ENCODE measurements at regions of chr16 and their contacts with region 1.

Region 1: DNA sequence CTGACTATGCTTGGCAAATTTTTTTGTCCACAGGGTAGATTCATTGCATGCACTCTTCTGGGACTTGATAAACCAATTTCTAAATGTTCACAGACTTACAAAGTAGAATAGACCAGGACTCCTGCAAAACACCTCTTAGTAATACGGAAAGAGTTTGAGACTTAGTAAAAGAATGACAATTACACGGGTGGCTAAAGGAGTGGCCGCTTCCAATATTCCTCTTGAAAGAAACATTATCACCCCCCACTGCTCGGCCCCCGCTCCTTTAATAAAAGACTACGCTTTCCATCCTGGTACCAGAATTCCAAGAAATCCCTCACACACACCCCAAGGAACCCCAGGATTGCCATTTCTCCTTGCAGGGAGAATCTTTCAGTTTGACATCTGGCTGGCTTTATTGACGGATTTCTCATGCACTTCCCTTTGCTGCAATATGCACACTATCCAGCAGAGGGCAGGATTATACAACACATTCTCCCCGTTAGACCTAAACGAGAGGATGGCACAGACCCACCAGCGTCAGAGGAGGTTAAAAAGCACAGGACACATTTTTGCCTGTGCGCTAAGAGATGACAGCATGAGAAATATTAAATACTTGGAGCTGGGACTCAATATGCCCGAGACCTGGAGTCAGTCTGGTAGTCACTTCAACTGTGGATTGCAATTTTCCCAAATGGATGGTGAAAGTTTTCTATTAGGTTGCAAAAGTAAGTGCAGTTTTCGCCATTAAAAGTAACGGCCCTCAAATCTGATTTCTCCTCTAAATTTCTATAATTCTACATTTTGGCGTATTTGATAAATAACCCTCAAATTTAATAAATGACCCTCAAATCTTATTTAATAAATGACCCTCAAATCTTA is 46.6 kb upstream of the NUDT7 start:
- DNase-seq: peak; percentile 61
- CTCF ChIP-seq: peak; percentile 87

Region 2: DNA sequence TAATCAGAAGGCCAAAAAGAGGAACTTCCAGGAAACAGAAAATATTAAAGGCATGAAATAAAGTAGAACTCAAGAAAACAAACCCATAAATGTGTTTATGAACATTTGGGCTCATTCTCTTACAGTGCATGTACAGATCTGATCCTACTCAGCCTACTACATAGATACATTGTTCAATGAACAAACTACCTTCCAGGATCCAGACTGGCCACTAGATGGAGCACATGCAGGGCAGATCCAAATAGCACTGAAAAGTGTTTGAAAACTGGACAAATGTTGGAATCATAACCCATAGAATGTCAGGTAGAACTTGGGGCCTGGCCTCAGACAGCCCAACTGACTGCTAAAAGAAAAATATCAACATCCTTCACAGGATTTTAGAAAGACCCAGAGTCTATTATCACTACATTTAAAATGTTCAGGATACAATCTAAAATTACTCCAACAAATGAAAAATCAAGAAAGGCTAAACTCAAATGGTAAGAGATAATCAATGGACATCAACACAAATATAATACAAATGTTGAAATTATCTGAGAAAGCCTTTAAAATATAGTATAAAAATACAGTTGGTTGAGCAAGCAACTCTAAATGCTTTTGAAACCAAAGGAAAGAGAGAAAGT is 75.8 kb before region 1 on chr16:
- CTCF ChIA-PET with region 1: no interaction called
- POLR2A ChIA-PET with region 1: no interaction called
- DNase-seq: peak; percentile 22
- CTCF ChIP-seq: peak; percentile 76

Region 3: DNA sequence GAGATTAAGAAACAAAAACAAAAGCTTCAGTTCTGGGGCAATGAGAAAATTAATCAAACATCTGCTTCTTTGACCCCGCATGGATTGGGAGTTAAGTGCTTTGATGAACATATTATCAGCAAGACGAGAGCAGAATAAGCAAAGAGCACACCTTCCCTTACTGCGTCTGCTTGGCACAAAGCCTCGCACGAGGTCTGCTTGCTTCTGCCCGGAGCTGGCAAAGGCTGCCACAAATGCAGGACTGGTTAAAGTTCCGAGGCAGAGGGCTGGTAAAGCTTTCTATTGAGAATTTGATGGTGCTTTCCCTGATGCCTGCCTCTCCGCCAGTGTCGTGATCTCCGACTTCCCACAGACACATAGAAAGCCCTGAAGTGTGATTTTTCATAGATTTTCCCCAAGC is 129.7 kb after region 1 on chr16:
- CTCF ChIA-PET with region 1: no interaction called
- POLR2A ChIA-PET with region 1: no interaction called
- DNase-seq: no peak
- CTCF ChIP-seq: no peak

Region 4: GRCh38 chr16:77963185-77964044 is 287.7 kb after region 1 on chr16:
- CTCF ChIA-PET with region 1: interaction called, 10 read pairs
- POLR2A ChIA-PET with region 1: no interaction called
- DNase-seq: peak; percentile 39
- CTCF ChIP-seq: no peak

Region 5: GRCh38 chr16:77971306-77972271 is 295.9 kb after region 1 on chr16:
- CTCF ChIA-PET with region 1: interaction called, 42 read pairs
- POLR2A ChIA-PET with region 1: no interaction called
- DNase-seq: peak; percentile 62
- CTCF ChIP-seq: peak; percentile 74

Region 6: GRCh38 chr16:78081341-78081740 is 405.6 kb after region 1 on chr16:
- CTCF ChIA-PET with region 1: no interaction called
- POLR2A ChIA-PET with region 1: no interaction called
- DNase-seq: no peak
- CTCF ChIP-seq: no peak